Activated CD4-positive, alpha-beta memory T cell treated with anti-CD3 and anti-CD28 coated beads for 36 hours (primary cell): ENCODE measurements at regions of chr1 and their contacts with region 1.

Region 1: GRCh38 chr1:112904071-112904830 is 51.7 kb downstream of the SLC16A1 start:
- DNase-seq: peak; percentile 81
- H3K4me3 Mint-ChIP-seq: no peak overlapping the region
- H3K27ac Mint-ChIP-seq: peak overlapping the region; percentile 40
- H3K4me1 Mint-ChIP-seq: peaks cover 37% of the 10 kb centered on the region
- H3K27me3 Mint-ChIP-seq: no peaks in the 10 kb centered on the region

Region 2: GRCh38 chr1:112754116-112754628 is 150.1 kb before region 1 on chr1:
- CTCF ChIA-PET with region 1: no interaction called
- POLR2A ChIA-PET with region 1: no interaction called
- intact Hi-C with region 1: no loop called
- DNase-seq: no peak
- H3K4me3 Mint-ChIP-seq: no peak overlapping the region
- H3K27ac Mint-ChIP-seq: no peak overlapping the region
- H3K4me1 Mint-ChIP-seq: no peaks in the 10 kb centered on the region
- H3K27me3 Mint-ChIP-seq: peaks cover 27% of the 10 kb centered on the region

Region 3: GRCh38 chr1:112788561-112788960 is 115.7 kb before region 1 on chr1:
- CTCF ChIA-PET with region 1: no interaction called
- POLR2A ChIA-PET with region 1: no interaction called
- intact Hi-C with region 1: no loop called
- DNase-seq: no peak
- H3K4me3 Mint-ChIP-seq: no peak overlapping the region
- H3K27ac Mint-ChIP-seq: no peak overlapping the region
- H3K4me1 Mint-ChIP-seq: no peaks in the 10 kb centered on the region
- H3K27me3 Mint-ChIP-seq: peaks cover 2% of the 10 kb centered on the region

Region 4: GRCh38 chr1:112809253-112809684 is 95.0 kb before region 1 on chr1:
- CTCF ChIA-PET with region 1: no interaction called
- POLR2A ChIA-PET with region 1: no interaction called
- intact Hi-C with region 1: no loop called
- DNase-seq: peak; percentile 81
- H3K4me3 Mint-ChIP-seq: no peak overlapping the region
- H3K27ac Mint-ChIP-seq: no peak overlapping the region
- H3K4me1 Mint-ChIP-seq: peaks cover 2% of the 10 kb centered on the region
- H3K27me3 Mint-ChIP-seq: no peaks in the 10 kb centered on the region

Region 5: DNA sequence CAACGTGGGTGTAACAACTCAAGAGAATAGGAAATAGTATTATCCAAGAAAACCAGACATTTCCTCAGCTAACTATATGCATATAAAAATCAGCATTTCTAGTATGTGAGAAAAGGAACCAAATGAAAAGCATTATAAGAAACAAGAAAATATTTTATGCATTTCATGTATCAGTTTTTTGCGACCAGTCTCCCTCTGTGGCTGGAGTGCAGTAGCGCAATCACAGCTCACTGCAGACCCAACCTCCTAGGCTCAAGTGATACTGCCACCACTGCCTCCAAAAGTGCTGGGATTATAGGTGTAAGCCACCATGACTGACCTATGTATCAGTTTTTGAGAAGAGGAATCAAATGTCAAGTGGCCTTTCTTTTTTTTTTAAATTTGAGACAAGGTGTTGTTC is 20.8 kb after region 1 on chr1:
- CTCF ChIA-PET with region 1: no interaction called
- POLR2A ChIA-PET with region 1: no interaction called
- intact Hi-C with region 1: no loop called
- DNase-seq: no peak
- H3K4me3 Mint-ChIP-seq: no peak overlapping the region
- H3K27ac Mint-ChIP-seq: no peak overlapping the region
- H3K4me1 Mint-ChIP-seq: no peaks in the 10 kb centered on the region
- H3K27me3 Mint-ChIP-seq: no peaks in the 10 kb centered on the region

Region 6: DNA sequence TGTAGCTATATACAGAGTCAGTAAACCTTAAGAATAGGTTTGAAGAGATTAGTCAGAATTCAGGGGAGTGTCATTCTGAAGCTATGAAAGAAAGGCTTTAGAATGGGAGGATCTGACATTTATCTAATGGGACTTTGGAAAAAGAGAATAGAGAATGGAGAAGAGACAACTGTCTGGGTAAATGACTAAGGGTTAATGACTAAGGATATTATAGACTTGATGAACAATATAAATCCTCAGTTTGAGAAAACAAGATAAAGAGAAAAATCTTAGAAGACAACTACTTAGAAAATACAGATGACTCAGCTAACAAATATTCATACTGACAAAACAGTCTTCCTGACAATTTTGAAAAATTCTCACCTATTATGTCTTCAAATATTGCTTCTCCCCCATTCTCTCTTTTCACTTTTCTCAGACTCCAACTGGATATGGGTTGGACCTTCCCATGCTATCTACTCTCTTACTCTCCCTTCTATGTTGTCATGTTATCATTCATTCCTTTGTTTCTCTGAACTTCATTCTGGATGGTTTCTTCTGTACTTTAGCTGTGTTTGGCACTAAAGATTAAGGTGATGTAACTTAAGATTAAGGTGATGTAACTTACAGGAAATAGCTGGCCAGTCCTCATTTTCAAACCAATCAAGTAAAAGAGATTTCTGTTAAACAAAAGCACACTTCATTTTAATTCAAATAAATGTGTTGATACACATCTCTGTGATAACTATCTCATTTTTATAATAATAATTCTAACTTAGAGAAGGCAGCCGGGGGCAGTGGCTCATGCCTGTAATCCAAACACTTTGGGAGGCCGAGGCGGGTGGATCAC is 31.4 kb after region 1 on chr1:
- CTCF ChIA-PET with region 1: interaction called, 4 read pairs
- POLR2A ChIA-PET with region 1: interaction called, 5 read pairs
- intact Hi-C with region 1: loop called (anchors 2 kb)
- DNase-seq: no peak
- H3K4me3 Mint-ChIP-seq: peak overlapping the region; percentile 6
- H3K27ac Mint-ChIP-seq: peak overlapping the region; percentile 78
- H3K4me1 Mint-ChIP-seq: peaks cover 38% of the 10 kb centered on the region
- H3K27me3 Mint-ChIP-seq: no peaks in the 10 kb centered on the region